Common myeloid progenitor, CD34-positive (primary cell): ENCODE measurements at regions of chr1 and their contacts with region 1.

Region 1: GRCh38 chr1:9905010-9905409 is 5.1 kb downstream of the CTNNBIP1 start:
- DNase-seq: peak in 2 of 3 donors; percentile 26 to 37
- H3K4me3 ChIP-seq: no peak overlapping the region
- H3K27ac ChIP-seq: no peak overlapping the region
- H3K4me1 ChIP-seq: peaks cover 2 to 50% (median 34%) of the 10 kb centered on the region in 4 experiments
- H3K27me3 ChIP-seq: no peaks in the 10 kb centered on the region

Region 2: DNA sequence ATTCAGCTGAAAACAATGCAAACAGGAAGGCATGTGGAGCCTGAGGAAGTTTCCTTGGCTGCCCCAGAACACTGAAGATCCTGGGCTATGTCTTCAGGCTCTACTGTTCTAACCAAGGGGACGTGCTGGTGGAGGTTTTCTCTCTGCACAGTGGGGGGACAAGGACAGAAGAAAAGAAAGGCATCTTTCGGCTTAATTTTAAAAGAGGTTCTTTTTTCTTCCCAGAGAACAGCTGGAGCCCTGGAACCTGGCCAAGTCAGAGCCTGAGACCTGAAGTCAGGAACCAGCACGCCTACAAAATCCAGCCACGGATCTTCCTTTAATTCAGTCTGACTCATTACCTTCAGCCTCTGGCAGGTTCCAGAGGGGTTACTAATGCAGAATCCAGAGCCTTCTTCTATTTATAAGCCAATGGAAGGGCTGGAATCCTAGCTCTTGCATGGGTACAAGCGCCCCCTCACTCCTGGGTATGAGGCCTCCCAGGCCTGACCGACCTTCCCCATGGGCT is 14.7 kb before region 1 on chr1:
- CTCF ChIA-PET with region 1: interaction called, 20 read pairs
- POLR2A ChIA-PET with region 1: interaction called, 5 read pairs
- DNase-seq: peak in 2 of 3 donors; percentile 50 to 58
- H3K4me3 ChIP-seq: peak overlapping the region in 1 of 7 experiments; percentile 28
- H3K27ac ChIP-seq: peak overlapping the region in 1 of 2 experiments; percentile 50
- H3K4me1 ChIP-seq: peaks cover 18 to 60% (median 58%) of the 10 kb centered on the region in 4 experiments
- H3K27me3 ChIP-seq: no peaks in the 10 kb centered on the region

Region 3: GRCh38 chr1:9929431-9930385 is 24.7 kb after region 1 on chr1:
- CTCF ChIA-PET with region 1: no interaction called
- POLR2A ChIA-PET with region 1: no interaction called
- DNase-seq: no peak
- H3K4me3 ChIP-seq: no peak overlapping the region
- H3K27ac ChIP-seq: peak overlapping the region in 1 of 2 experiments; percentile 72
- H3K4me1 ChIP-seq: peaks cover 0 to 5% (median 0%) of the 10 kb centered on the region in 4 experiments
- H3K27me3 ChIP-seq: no peaks in the 10 kb centered on the region